Head of caudate nucleus (tissue), 42 donors: ENCODE measurements at regions of chr17 and their contacts with region 1.

Region 1: DNA sequence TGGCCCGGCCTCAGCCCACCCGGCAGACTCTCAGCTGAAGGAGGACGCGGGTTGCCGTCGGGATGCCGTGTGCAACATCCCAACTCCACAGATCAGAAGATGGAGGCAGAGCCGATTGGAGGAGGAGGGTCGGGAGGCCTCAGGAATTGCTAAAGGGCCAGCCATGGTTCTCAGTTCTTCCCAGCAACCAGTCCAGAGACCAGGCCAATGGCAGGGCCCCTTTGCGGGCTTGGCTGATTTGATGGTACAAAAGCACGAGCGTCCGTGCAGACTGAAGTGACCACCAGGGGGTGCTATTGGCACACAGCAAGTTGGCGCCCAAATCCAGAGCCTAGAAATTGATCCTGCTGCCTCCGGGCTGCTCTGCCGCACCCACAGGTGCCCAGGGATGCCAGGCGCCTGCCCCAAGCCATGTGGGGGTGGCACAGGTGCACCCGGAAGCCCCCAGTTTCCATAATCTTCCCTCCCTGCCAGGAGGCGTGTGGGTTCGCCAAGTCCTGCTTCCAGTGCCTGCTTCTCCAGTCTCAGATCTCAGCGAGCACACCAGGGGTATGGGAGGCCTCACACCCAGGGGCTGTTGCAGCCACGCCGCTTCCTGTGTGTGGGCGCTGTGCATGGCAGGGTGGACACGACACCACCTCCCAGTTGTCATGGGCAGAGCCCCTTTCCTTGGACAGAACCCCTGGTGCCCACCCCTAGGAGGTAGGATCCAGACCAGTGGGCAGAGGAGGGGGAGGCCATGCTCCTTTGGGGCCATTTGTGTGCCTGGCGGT is 7.1 kb upstream of the TEX19 start:
- DNase-seq: peak; percentile 65 to 94 (median 86)

Region 2: GRCh38 chr17:81967533-81968395 is 384.1 kb before region 1 on chr17:
- intact Hi-C with region 1: no loop called
- DNase-seq: peak; percentile 85 to 97 (median 92)

Region 3: GRCh38 chr17:82414548-82415281 is 62.8 kb after region 1 on chr17:
- intact Hi-C with region 1: loop called (anchors 5 kb)
- DNase-seq: peak; percentile 42 to 87 (median 70)